Breast epithelium (tissue), 4 donors: ENCODE measurements at regions of chr6 and their contacts with region 1.

Region 1: DNA sequence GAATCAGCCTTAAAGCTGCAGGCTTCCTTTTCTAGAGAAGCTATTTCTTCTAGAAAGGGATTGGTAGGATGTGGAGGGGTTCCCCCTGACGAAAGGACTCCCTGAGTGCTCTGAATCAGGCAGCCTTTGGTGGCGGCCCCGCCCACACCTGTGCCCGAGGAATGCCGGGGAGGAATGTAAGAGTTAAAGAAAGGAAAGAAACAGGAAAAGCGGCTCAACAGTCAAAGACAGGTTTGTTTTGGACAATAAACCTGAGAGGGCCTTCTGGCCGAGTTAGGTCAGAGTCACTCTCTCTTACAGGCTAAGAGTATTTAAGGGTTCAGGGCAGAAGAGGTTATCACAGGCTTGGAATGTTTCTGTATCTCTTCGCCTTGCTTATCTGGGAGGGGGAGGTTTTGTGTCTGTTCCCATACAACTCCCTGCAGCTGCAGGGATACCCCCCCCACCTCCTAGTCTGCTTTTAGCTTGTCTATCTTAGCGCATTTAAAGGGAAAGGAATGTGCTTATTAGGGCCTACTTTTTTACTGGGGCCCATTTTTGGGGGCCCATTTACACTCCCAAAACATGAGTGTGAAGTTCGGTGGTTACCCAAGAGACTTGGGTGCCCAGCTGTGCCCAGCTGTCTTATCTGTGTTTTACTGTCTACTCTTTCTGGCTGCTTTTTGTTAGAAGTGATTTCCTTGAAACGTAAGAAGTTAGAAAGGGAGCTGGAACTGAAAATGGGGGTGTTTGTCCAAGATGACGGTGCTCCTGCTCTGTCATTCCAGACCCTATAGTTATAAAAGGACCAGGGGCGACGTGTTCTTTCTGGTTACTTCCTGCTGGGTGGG is 32.8 kb downstream of the DYNLT1 start:
- DNase-seq: no peak
- H3K4me3 ChIP-seq: no peak overlapping the region
- H3K27ac ChIP-seq: no peak overlapping the region
- H3K4me1 ChIP-seq: no peaks in the 10 kb centered on the region
- H3K27me3 ChIP-seq: no peaks in the 10 kb centered on the region
- CTCF ChIP-seq: no peak
- POLR2A ChIP-seq: no peak

Region 2: DNA sequence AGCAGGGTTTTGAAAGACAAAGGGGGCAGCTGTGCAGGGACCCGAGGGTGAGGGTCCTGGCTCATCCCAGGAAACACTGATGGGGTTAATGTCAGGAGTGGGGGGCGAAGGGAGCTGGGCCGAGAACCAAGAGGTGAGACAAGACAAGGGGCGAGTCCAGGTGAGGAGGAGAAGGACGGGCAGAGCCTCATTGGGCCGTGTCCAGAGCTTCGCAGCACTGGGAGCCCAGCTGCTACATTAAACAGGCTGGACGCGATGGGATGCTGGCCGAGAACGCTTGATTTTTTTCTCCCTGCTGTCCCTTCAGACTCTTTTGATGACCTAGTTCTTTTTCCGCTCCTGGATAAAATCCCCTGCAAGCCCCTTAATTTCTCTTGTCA is 961.5 kb before region 1 on chr6:
- intact Hi-C with region 1: loop called (anchors 10 kb)
- DNase-seq: peak in 1 of 2 donors; percentile 45
- H3K4me3 ChIP-seq: peak overlapping the region in 2 of 3 donors; percentile 25 to 51
- H3K27ac ChIP-seq: peak overlapping the region in 1 of 2 donors; percentile 20
- H3K4me1 ChIP-seq: no peaks in the 10 kb centered on the region
- H3K27me3 ChIP-seq: no peaks in the 10 kb centered on the region
- CTCF ChIP-seq: no peak
- POLR2A ChIP-seq: no peak

Region 3: GRCh38 chr6:158220786-158221442 is 390.8 kb before region 1 on chr6:
- intact Hi-C with region 1: loop called (anchors 5 kb)
- DNase-seq: peak; percentile 74 to 82
- H3K4me3 ChIP-seq: no peak overlapping the region
- H3K27ac ChIP-seq: no peak overlapping the region
- H3K4me1 ChIP-seq: no peaks in the 10 kb centered on the region
- H3K27me3 ChIP-seq: no peaks in the 10 kb centered on the region
- CTCF ChIP-seq: peak; percentile 78 to 91 (median 86)
- POLR2A ChIP-seq: no peak

Region 4: DNA sequence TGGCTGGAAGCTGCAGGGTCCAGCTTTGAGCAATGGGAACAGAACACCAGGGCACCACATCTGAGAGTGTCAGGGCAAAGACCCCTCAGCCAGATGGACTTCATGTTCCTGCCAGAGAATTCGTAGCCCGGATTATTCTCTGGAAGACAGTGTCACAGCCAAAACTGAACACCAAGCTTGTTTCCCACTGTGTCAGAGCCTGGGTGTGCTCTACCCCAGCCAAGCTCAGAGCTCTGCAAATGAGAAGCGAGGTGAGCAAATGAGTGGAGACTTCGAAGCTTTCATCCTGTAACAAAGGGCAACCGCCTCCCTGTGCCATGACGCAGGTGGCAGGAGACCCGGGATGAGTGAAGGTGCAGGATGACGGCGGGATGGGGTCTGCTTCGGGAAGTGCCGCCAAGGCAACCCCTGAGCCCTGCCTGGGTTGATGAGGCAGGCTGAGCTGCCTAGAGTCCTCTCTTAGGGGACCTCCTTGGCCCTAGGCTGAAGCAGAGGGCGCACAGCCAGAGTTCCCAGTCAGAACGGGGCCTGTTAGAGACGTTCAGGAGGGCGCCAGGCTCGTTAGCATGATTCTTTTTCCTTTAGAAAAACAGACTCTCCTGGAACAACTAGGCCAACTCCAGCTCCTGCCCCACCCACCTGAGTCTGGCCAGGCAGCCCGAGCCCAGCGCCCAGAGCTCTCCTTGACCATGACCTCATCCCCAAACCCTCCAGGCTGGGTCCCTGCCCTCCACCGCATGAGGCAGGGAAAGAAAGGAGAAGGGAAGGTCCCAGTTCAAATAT is 893.6 kb after region 1 on chr6:
- intact Hi-C with region 1: no loop called
- DNase-seq: no peak
- H3K4me3 ChIP-seq: no peak overlapping the region
- H3K27ac ChIP-seq: no peak overlapping the region
- H3K4me1 ChIP-seq: no peaks in the 10 kb centered on the region
- H3K27me3 ChIP-seq: no peaks in the 10 kb centered on the region
- CTCF ChIP-seq: no peak
- POLR2A ChIP-seq: no peak